ENCODE measurements at regions of chr5 and their contacts with region 1.

Region 1: DNA sequence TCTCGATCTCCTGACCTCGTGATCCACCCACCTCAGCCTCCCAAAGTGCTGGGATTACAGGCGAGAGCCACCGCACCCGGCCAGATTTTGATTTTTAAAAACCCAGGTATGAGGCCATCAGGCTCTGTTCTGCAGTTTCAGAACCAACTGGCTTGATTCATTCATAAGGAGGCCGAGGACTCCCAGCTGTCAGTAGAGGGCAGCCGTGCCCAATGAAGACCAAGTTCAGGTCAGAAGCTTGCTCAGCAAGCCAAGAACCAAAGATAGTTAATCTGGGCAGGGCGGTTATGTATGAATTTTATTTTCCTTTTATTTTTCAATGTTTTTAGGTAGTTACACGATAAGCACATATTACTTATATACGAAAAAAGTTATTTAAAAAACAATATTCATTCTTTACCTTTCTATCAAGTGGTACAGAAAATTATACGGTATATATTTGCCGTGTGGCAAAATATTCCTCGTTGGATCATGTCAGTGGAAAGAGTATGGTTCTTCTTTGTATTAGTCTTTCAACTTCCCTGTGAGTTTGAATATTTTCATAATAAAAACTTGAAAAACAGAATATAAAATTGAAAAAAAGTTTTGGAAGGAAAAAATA is 18.0 kb downstream of the MGAT1 start:
- DNase-seq: peak; percentile 83 to 90 (median 89)
- H3K4me3 ChIP-seq: no peak overlapping the region
- H3K27ac ChIP-seq: peak overlapping the region in 1 of 2 donors; percentile 93
- H3K4me1 ChIP-seq: peaks cover 32% of the 10 kb centered on the region
- H3K27me3 ChIP-seq: no peaks in the 10 kb centered on the region
- CTCF ChIP-seq: peak; percentile 62 to 75 (median 69)
- EP300 ChIP-seq: no peak
- POLR2A ChIP-seq: no peak

Region 2: GRCh38 chr5:180831139-180832048 is 46.8 kb after region 1 on chr5:
- intact Hi-C with region 1: loop called in 1 of 4 experiments (anchors 5 kb)
- DNase-seq: peak; percentile 86 to 92 (median 89)
- H3K4me3 ChIP-seq: peak overlapping the region; percentile 87
- H3K27ac ChIP-seq: peak overlapping the region; percentile 93 to 98
- H3K4me1 ChIP-seq: peaks cover 5% of the 10 kb centered on the region
- H3K27me3 ChIP-seq: no peaks in the 10 kb centered on the region
- CTCF ChIP-seq: peak; percentile 14 to 43 (median 31)
- EP300 ChIP-seq: no peak
- POLR2A ChIP-seq: peak; percentile 79

Region 3: GRCh38 chr5:180860887-180861822 is 76.6 kb after region 1 on chr5 and contains the start of gene ZFP62:
- intact Hi-C with region 1: loop called in 3 of 4 experiments (anchors 5 to 10 kb)
- DNase-seq: peak; percentile 88 to 95 (median 92)
- H3K4me3 ChIP-seq: peak within 1 kb of the TSS; percentile 80
- H3K27ac ChIP-seq: peak within 1 kb of the TSS; percentile 64 to 77
- H3K4me1 ChIP-seq: peaks cover 3% of the 10 kb centered on the region
- H3K27me3 ChIP-seq: no peaks in the 10 kb centered on the region
- CTCF ChIP-seq: peak in 1 of 3 donors; percentile 27
- EP300 ChIP-seq: no peak
- POLR2A ChIP-seq: peak; percentile 41
- total RNA-seq, gene ZFP62: 22.7 to 47.8 (median 33.8) TPM

Region 4: DNA sequence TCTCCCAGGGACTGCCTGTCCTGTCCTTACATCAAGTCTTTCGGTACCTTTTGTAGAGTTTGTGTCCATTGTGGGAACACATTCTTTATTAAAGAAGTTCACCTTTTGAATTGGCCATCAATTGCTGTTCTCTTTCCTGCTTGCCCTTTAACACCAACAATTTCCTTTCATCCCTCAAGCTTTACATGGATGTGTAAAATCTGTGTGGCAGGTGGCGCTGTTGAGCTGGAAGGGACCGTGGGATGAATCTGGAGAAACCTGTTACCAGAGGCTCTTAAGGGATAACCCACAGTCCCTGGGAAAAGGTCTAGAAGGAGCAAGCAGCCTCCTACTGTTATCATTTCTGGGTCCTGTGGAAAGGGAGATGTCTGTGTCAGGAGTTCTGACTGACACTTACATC is 84.4 kb after region 1 on chr5:
- intact Hi-C with region 1: loop called in 3 of 4 experiments (anchors 5 to 10 kb)
- DNase-seq: peak; percentile 76 to 91 (median 85)
- H3K4me3 ChIP-seq: no peak overlapping the region
- H3K27ac ChIP-seq: peak overlapping the region in 1 of 2 donors; percentile 6
- H3K4me1 ChIP-seq: no peaks in the 10 kb centered on the region
- H3K27me3 ChIP-seq: no peaks in the 10 kb centered on the region
- CTCF ChIP-seq: peak; percentile 22 to 67 (median 61)
- EP300 ChIP-seq: no peak
- POLR2A ChIP-seq: no peak

Region 5: DNA sequence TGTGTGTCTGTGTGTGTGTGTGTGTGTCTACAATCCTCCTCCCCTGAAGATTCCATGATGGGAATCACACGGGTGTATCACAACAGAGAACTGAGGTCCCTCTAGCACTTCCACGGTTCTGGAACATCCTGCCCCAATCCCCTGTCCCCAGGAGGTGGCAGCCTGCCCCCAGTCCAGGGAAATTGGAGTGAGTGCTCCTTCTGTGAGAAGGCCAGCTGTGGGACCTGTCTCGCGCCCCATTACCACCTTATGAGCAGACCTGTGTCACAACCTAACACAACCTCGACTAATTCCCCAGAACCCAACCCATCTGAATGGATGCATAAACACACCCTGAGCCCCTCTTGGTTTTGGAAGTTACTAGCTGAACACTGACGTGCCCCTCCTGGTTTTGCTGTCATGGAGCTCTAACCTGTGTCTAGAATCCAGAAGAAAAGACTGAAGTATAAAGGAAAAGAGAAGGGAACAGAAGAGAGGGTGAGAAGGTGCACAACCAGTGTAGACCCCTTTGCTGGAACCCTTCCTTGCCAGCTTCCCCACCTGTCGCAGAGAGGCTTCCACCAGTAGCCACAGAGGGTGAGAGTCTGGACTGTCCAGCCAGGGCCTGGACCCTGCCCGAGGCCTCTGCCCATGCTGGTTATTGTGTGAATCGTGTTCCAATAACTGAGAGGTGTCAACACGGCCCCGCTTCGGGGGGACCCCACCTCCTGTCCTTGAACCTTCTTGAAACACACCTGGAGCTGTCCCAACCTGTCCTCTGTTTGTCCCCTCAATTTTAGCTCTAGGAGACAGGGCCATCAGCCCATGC is 258.9 kb after region 1 on chr5:
- intact Hi-C with region 1: loop called in 1 of 4 experiments (anchors 10 kb)
- DNase-seq: no peak
- H3K4me3 ChIP-seq: no peak overlapping the region
- H3K27ac ChIP-seq: no peak overlapping the region
- H3K4me1 ChIP-seq: no peaks in the 10 kb centered on the region
- H3K27me3 ChIP-seq: no peaks in the 10 kb centered on the region
- CTCF ChIP-seq: no peak
- EP300 ChIP-seq: no peak
- POLR2A ChIP-seq: no peak

Region 6: DNA sequence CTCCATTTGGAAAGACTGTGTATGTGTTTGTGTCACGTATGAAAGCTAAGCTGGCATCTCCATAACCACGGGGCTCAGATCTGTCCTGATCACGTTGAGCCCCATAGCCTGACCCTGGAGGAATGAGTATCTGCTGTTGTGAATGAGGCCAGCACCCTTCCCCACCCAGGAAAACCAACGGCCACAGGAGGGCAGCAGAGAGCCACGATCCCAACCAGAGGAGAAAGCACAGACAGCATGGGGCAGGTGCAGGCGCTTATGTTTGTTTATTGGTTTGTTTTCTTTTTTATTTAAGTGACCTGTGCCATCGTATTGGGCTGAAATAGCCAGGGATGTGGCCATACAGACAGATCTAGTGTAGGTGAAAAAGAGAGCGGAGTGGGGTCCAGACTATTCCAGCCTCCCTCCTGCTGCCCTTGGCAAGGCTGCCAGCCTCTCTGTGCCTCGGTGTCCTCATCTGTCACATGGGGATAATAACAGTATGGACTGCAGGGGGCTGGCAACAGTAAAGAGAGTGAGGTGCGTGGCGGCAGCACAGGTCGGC is 374.8 kb after region 1 on chr5:
- intact Hi-C with region 1: loop called in 2 of 4 experiments (anchors 5 to 10 kb)
- DNase-seq: peak; percentile 82 to 93 (median 90)
- H3K4me3 ChIP-seq: no peak overlapping the region
- H3K27ac ChIP-seq: no peak overlapping the region
- H3K4me1 ChIP-seq: peaks cover 4% of the 10 kb centered on the region
- H3K27me3 ChIP-seq: no peaks in the 10 kb centered on the region
- CTCF ChIP-seq: peak; percentile 63 to 81 (median 66)
- EP300 ChIP-seq: no peak
- POLR2A ChIP-seq: no peak

Region 7: GRCh38 chr5:181181650-181182565 is 397.3 kb after region 1 on chr5:
- intact Hi-C with region 1: loop called in 2 of 4 experiments (anchors 10 kb)
- DNase-seq: no peak
- H3K4me3 ChIP-seq: no peak overlapping the region
- H3K27ac ChIP-seq: no peak overlapping the region
- H3K4me1 ChIP-seq: no peaks in the 10 kb centered on the region
- H3K27me3 ChIP-seq: no peaks in the 10 kb centered on the region
- CTCF ChIP-seq: peak in 1 of 3 donors; percentile 34
- EP300 ChIP-seq: no peak
- POLR2A ChIP-seq: no peak

Measured in ovary (tissue), 10 donors.